GM13976 (cell line): ENCODE measurements at regions of chr1 and their contacts with region 1.

Region 1: GRCh38 chr1:108963052-108963686 is at the start of gene CLCC1:
- DNase-seq: peak; percentile 96
- CTCF ChIP-seq: no peak

Region 2: DNA sequence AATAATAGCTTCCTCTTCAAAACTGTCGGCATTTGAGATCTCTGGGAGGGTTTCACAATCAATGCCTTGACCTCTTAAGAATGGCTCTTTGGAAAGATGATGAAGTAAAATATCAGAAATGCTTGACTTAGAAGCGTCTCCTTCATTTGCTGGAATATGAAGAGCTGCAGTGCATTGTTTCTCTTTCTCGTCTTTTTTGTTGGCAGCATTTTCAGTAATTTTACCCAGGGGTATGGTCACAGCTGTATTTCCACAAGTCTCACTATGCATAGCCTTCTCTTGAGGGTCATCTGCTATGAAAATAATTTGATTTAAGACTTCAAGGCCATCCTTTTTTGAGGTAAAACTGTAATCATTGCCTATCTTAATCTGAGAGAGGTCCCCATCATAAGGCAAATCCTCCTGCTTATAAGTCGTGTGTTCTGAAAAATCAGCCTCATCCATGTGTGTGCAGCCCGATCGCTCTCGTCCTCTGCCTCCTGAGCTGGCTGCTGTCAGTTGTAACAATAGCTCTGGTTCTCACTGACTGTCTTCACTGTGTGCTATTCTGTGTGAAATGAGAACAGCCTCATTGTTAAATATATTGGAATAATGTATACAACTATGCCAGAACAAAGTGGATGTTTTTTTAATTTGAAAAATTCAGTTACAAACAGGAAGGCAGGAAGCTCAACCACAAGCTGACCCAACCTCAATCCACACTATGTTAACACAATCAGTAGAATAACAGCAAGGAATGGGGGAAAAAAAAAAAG is 110.8 kb before region 1 on chr1:
- in situ Hi-C with region 1: loop called (anchors 25 kb)
- DNase-seq: no peak
- CTCF ChIP-seq: no peak

Region 3: DNA sequence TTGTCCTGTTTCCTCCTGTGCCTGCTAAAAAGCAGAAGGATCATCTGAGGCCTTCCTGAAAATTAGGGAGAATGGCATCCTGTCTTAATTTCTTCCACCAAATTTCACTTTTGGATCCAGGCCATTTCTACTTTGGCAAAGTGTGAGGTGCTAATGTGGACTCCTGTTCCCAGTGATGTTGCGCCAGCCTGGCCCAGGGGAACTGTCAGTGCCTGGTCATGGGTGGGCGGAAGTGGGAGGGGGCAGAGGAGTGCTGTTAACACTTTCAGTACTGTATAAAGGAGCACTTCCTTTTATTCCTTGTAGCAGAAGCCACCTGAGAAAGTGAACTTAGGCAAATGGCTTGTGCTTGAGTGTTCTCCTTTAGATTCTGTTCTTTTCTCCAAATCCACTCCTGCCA is 170.6 kb after region 1 on chr1:
- in situ Hi-C with region 1: no loop called
- DNase-seq: no peak
- CTCF ChIP-seq: no peak